ENCODE measurements at regions of chr10 and their contacts with region 1.

Region 1: GRCh38 chr10:124928087-124928486 is 13.8 kb upstream of the ZRANB1 start:
- DNase-seq: no peak
- ATAC-seq: no peak
- H3K4me3 ChIP-seq: no peak overlapping the region
- H3K4me3 Mint-ChIP-seq: no peak overlapping the region
- H3K27ac ChIP-seq: no peak overlapping the region
- H3K27ac Mint-ChIP-seq: no peak overlapping the region
- H3K4me1 ChIP-seq: peaks cover 0 to 2% of the 10 kb centered on the region in 2 experiments
- H3K4me1 Mint-ChIP-seq: peaks cover 48 to 55% (median 50%) of the 10 kb centered on the region in 3 donors
- H3K27me3 ChIP-seq: no peaks in the 10 kb centered on the region
- H3K27me3 Mint-ChIP-seq: no peaks in the 10 kb centered on the region

Region 2: GRCh38 chr10:124916585-124917427 is 11.3 kb before region 1 on chr10:
- CTCF ChIA-PET with region 1: no interaction called
- POLR2A ChIA-PET with region 1: no interaction called
- DNase-seq: peak; percentile 88 to 98 (median 95)
- ATAC-seq: peak; percentile 91 to 94 (median 93)
- H3K4me3 ChIP-seq: peak overlapping the region; percentile 80 to 86
- H3K4me3 Mint-ChIP-seq: peak overlapping the region; percentile 86 to 92 (median 89)
- H3K27ac ChIP-seq: peak overlapping the region; percentile 89
- H3K27ac Mint-ChIP-seq: peak overlapping the region; percentile 96
- H3K4me1 ChIP-seq: peaks cover 6 to 23% of the 10 kb centered on the region in 2 experiments
- H3K4me1 Mint-ChIP-seq: peaks cover 40 to 42% (median 40%) of the 10 kb centered on the region in 3 donors
- H3K27me3 ChIP-seq: no peaks in the 10 kb centered on the region
- H3K27me3 Mint-ChIP-seq: peaks cover 0 to under 1% of the 10 kb centered on the region in 2 donors

Region 3: GRCh38 chr10:124943301-124944092 is 15.4 kb after region 1 on chr10:
- CTCF ChIA-PET with region 1: interaction called in 1 of 2 experiments, 3 read pairs
- POLR2A ChIA-PET with region 1: interaction called, 3 to 11 read pairs
- DNase-seq: no peak
- ATAC-seq: no peak
- H3K4me3 ChIP-seq: no peak overlapping the region
- H3K4me3 Mint-ChIP-seq: peak overlapping the region in 1 of 3 donors; percentile 1
- H3K27ac ChIP-seq: no peak overlapping the region
- H3K27ac Mint-ChIP-seq: no peak overlapping the region
- H3K4me1 ChIP-seq: peaks cover 4 to 6% of the 10 kb centered on the region in 2 experiments
- H3K4me1 Mint-ChIP-seq: peaks cover 70 to 78% (median 77%) of the 10 kb centered on the region in 3 donors
- H3K27me3 ChIP-seq: no peaks in the 10 kb centered on the region
- H3K27me3 Mint-ChIP-seq: no peaks in the 10 kb centered on the region